Activated B cell treated with CpG ODN at 0.5 μM for 24 hours (primary cell): ENCODE measurements at regions of chr2 and their contacts with region 1.

Region 1: GRCh38 chr2:224764565-224765236 is 48.5 kb upstream of the CCDC195 start:
- DNase-seq: no peak
- ATAC-seq: peak; percentile 58
- H3K4me3 Mint-ChIP-seq: no peak overlapping the region
- H3K27ac Mint-ChIP-seq: peak overlapping the region; percentile 83
- H3K4me1 Mint-ChIP-seq: peaks cover 36% of the 10 kb centered on the region
- H3K27me3 Mint-ChIP-seq: no peaks in the 10 kb centered on the region
- CTCF ChIP-seq: no peak

Region 2: GRCh38 chr2:224666951-224667553 is 97.6 kb before region 1 on chr2:
- CTCF ChIA-PET with region 1: no interaction called
- POLR2A ChIA-PET with region 1: no interaction called
- intact Hi-C with region 1: loop called (anchors 5 kb)
- DNase-seq: no peak
- ATAC-seq: peak; percentile 85
- H3K4me3 Mint-ChIP-seq: peak overlapping the region; percentile 56
- H3K27ac Mint-ChIP-seq: peak overlapping the region; percentile 68
- H3K4me1 Mint-ChIP-seq: peaks cover 19% of the 10 kb centered on the region
- H3K27me3 Mint-ChIP-seq: no peaks in the 10 kb centered on the region
- CTCF ChIP-seq: no peak

Region 3: DNA sequence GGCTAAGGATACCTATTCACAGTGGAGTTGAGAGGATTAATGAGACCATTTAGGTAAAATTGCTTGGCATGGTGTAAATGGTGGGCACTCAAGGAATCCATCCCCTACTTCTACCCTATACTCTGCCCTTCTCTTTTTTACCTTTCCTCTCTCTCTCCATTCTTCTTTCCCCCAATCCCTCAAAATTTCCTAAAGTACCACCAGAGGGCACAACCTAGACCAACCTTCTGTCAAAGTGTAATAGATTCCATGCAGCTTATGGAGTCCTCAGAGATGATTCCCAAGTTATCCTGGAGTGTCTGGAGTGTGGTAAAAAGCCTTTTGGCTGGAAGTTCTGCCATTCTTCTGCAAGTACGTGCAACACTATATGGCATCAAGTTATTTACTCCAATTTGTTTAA is 15.6 kb before region 1 on chr2:
- CTCF ChIA-PET with region 1: no interaction called
- POLR2A ChIA-PET with region 1: no interaction called
- intact Hi-C with region 1: no loop called
- DNase-seq: no peak
- ATAC-seq: no peak
- H3K4me3 Mint-ChIP-seq: no peak overlapping the region
- H3K27ac Mint-ChIP-seq: no peak overlapping the region
- H3K4me1 Mint-ChIP-seq: peaks cover 20% of the 10 kb centered on the region
- H3K27me3 Mint-ChIP-seq: no peaks in the 10 kb centered on the region
- CTCF ChIP-seq: no peak

Region 4: GRCh38 chr2:224786848-224787247 is 22.1 kb after region 1 on chr2:
- CTCF ChIA-PET with region 1: no interaction called
- POLR2A ChIA-PET with region 1: no interaction called
- intact Hi-C with region 1: no loop called
- DNase-seq: no peak
- ATAC-seq: no peak
- H3K4me3 Mint-ChIP-seq: no peak overlapping the region
- H3K27ac Mint-ChIP-seq: no peak overlapping the region
- H3K4me1 Mint-ChIP-seq: no peaks in the 10 kb centered on the region
- H3K27me3 Mint-ChIP-seq: no peaks in the 10 kb centered on the region
- CTCF ChIP-seq: no peak

Region 5: DNA sequence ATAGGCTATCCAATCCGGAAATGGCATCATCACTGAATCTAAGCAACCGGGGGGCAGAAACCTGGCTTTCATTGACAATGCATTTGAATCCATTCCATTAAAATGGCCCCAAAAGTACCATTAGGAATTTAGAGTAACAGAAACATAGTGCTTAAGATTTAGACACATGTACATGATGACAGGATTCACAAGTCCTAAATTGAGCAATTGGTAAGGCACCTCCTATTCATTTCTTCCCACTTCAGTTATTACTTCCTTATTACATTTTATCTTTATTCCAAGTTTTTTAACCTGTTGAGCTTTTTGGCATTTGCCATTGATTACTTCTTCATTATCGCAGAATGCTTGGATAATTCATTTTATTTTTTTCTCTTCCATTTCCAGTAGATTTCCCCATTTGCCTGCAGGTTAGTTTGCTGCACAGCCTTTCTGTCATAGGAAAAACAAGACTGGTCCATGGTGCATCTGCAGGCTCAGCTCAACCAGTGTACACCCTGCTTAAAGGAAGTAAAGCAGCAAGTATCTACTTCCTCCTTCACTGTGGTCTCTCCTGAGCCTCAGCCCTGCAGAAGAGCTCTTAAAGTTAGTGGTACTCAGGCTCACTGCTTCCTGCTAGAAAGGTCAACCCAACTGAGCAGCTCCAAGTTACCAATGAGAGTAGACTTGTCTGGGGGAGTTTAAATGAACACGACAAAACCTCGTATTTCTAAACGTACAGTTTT is 188.4 kb after region 1 on chr2:
- CTCF ChIA-PET with region 1: no interaction called
- POLR2A ChIA-PET with region 1: no interaction called
- intact Hi-C with region 1: no loop called
- DNase-seq: no peak
- ATAC-seq: peak; percentile 83
- H3K4me3 Mint-ChIP-seq: peak overlapping the region; percentile 42
- H3K27ac Mint-ChIP-seq: peak overlapping the region; percentile 79
- H3K4me1 Mint-ChIP-seq: peaks cover 92% of the 10 kb centered on the region
- H3K27me3 Mint-ChIP-seq: no peaks in the 10 kb centered on the region
- CTCF ChIP-seq: no peak